Naive thymus-derived CD4-positive, alpha-beta T cell (primary cell): ENCODE measurements at regions of chrX and their contacts with region 1.

Region 1: DNA sequence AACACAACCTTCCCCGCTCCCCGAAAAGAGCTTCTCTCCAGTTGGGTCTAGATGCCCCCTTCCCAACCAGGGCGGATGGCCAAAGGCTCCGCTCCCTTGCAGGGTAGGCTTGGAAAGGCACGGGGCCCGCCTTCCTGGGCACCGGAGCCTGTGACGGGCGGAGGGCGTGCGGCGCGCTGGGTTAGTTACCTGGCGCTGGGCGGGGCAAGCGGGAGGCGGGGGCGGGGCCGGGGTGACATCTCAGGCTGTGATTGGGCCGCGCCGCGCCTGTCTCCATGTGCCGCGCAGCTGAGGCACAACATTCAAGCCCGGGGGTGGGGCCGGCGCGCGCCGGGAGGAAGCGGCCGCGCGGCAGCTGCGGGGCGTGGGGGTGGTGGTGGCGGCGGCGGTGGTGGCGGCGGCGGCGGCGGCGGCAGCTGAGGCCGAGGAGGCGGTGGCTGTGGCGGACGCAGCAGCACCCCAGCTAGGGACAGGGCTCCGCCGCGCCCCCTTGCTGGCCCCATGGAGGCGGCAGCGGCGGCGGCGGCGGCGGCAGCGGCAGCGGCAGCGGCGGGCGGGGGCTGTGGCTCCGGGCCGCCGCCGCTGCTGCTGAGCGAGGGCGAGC is at the start of gene REPS2:
- DNase-seq: peak; percentile 51 to 82 (median 70)
- ATAC-seq: peak; percentile 98
- H3K4me3 ChIP-seq: peak within 1 kb of the TSS; percentile 39
- H3K4me3 Mint-ChIP-seq: peak within 1 kb of the TSS; percentile 77 to 88 (median 84)
- H3K27ac ChIP-seq: peak within 1 kb of the TSS; percentile 7
- H3K27ac Mint-ChIP-seq: peak within 1 kb of the TSS in 7 of 9 donors; percentile 51 to 86 (median 73)
- H3K4me1 ChIP-seq: no peaks in the 10 kb centered on the region
- H3K4me1 Mint-ChIP-seq: peaks cover 0 to 4% (median 0%) of the 10 kb centered on the region in 7 donors
- H3K27me3 ChIP-seq: no peaks in the 10 kb centered on the region
- H3K27me3 Mint-ChIP-seq: peaks cover 3 to 25% (median 6%) of the 10 kb centered on the region in 5 donors
- total RNA-seq, gene REPS2: 1.1 to 6.2 (median 1.9) TPM in 4 of 5 experiments, not detected in the other

Region 2: GRCh38 chrX:16619024-16619423 is 327.4 kb before region 1 on chrX:
- CTCF ChIA-PET with region 1: no interaction called
- POLR2A ChIA-PET with region 1: no interaction called
- intact Hi-C with region 1: no loop called
- DNase-seq: no peak
- ATAC-seq: no peak
- H3K4me3 ChIP-seq: no peak overlapping the region
- H3K4me3 Mint-ChIP-seq: no peak overlapping the region
- H3K27ac ChIP-seq: no peak overlapping the region
- H3K27ac Mint-ChIP-seq: no peak overlapping the region
- H3K4me1 ChIP-seq: no peaks in the 10 kb centered on the region
- H3K4me1 Mint-ChIP-seq: peaks cover 0 to 5% (median 3%) of the 10 kb centered on the region in 7 donors
- H3K27me3 ChIP-seq: no peaks in the 10 kb centered on the region
- H3K27me3 Mint-ChIP-seq: no peaks in the 10 kb centered on the region

Region 3: DNA sequence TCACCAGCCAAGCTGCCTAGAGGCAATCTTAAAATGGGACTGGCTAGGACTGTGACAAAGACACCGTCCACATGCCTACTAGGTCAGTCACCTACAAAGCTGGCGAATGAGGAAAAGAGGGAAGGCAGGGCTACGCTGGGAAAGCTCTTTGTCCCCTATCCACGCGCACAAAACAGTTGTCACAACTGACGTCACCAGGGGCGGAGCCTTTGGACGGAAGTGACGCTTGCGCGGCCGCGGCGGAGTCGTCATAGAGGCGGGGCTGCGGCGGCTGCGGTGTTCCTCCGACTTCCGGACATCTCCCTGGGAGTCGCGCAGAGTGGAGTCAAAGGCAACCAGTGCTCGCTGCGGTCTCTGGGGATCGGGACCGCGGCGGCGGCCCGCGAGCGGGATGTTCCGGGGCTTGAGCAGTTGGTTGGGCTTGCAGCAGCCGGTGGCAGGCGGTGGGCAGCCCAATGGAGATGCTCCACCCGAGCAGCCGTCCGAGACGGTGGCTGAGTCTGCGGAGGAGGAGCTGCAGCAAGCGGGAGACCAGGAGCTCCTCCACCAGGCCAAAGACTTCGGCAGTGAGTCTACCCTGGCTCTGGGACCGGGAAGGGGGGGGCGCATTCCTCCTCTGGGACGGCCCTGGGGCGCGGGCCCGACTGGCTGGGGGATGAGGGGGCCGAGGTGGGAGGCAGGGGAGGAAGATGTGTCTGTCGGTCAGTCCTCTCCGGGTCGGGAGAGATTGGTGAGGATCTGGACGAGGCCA is 227.0 kb before region 1 on chrX and contains the start of gene SYAP1:
- CTCF ChIA-PET with region 1: no interaction called
- POLR2A ChIA-PET with region 1: no interaction called
- intact Hi-C with region 1: loop called in 1 of 2 experiments (anchors 2 kb)
- DNase-seq: peak; percentile 85 to 100 (median 96)
- ATAC-seq: peak; percentile 96
- H3K4me3 ChIP-seq: peak within 1 kb of the TSS; percentile 95
- H3K4me3 Mint-ChIP-seq: peak within 1 kb of the TSS; percentile 88 to 98 (median 94)
- H3K27ac ChIP-seq: peak within 1 kb of the TSS; percentile 99
- H3K27ac Mint-ChIP-seq: peak within 1 kb of the TSS; percentile 92 to 100 (median 99)
- H3K4me1 ChIP-seq: peaks cover 0 to 10% of the 10 kb centered on the region in 2 donors
- H3K4me1 Mint-ChIP-seq: peaks cover 2 to 63% (median 39%) of the 10 kb centered on the region in 7 donors
- H3K27me3 ChIP-seq: no peaks in the 10 kb centered on the region
- H3K27me3 Mint-ChIP-seq: no peaks in the 10 kb centered on the region
- total RNA-seq, gene SYAP1: 15.4 to 36.9 (median 15.6) TPM

Region 4: DNA sequence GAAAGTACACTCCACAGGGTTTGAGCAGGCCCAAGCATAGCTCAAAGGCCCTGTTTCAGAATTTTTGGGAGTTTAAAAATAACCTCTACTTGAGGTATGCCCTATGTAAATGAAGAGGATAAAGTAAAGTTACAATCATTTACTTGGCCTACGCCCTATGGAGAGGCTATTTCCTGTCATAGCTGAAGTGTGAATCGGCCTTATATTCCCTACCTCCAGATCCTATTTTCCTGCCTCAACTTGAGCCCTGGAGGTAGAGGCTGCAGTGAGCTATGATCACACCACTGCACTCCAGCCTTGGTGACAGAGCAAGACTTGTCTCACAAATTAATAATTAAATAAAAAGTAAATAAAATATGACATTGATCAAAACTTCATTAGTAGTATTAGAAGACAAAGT is 171.7 kb before region 1 on chrX:
- CTCF ChIA-PET with region 1: no interaction called
- POLR2A ChIA-PET with region 1: no interaction called
- intact Hi-C with region 1: no loop called
- DNase-seq: no peak
- ATAC-seq: no peak
- H3K4me3 ChIP-seq: no peak overlapping the region
- H3K4me3 Mint-ChIP-seq: no peak overlapping the region
- H3K27ac ChIP-seq: no peak overlapping the region
- H3K27ac Mint-ChIP-seq: no peak overlapping the region
- H3K4me1 ChIP-seq: no peaks in the 10 kb centered on the region
- H3K4me1 Mint-ChIP-seq: no peaks in the 10 kb centered on the region
- H3K27me3 ChIP-seq: no peaks in the 10 kb centered on the region
- H3K27me3 Mint-ChIP-seq: no peaks in the 10 kb centered on the region

Region 5: DNA sequence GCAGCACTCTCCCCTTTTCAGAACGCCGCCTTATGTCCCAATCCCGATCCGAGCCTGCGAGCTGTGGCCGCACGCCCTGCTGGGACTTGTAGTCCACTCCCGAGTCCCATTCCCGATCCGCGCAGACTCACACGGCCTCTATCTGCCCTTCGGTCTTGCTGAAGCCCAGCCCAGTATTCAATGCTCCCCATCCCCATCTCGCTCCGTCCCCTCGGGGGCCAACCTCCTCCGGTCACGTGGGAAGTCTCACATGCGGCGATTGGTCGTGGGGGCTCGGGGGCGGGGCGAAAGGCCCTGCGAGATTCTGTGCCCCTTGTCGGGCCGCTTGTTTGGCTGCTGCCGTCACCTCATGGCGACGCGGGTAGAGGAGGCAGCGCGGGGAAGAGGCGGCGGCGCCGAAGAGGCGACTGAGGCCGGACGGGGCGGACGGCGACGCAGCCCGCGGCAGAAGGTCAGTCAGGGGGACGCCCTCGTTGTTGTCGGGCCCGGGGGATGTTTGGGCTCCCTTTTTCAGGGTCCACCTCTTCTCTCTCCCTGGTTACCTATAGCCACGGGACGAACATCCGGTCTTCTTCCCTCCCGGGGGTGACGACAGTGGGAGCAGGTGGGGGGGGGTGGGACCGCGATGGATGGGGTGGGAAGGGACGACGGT is 160.2 kb before region 1 on chrX and contains the start of gene TXLNG:
- CTCF ChIA-PET with region 1: no interaction called
- POLR2A ChIA-PET with region 1: no interaction called
- intact Hi-C with region 1: loop called in 1 of 2 experiments (anchors 1 kb)
- DNase-seq: peak; percentile 81 to 98 (median 97)
- ATAC-seq: peak; percentile 97
- H3K4me3 ChIP-seq: peak within 1 kb of the TSS; percentile 94
- H3K4me3 Mint-ChIP-seq: peak within 1 kb of the TSS; percentile 95 to 99 (median 97)
- H3K27ac ChIP-seq: peak within 1 kb of the TSS; percentile 88
- H3K27ac Mint-ChIP-seq: peak within 1 kb of the TSS; percentile 78 to 94 (median 90)
- H3K4me1 ChIP-seq: peaks cover 0 to 3% of the 10 kb centered on the region in 2 donors
- H3K4me1 Mint-ChIP-seq: peaks cover 4 to 42% (median 12%) of the 10 kb centered on the region in 7 donors
- H3K27me3 ChIP-seq: no peaks in the 10 kb centered on the region
- H3K27me3 Mint-ChIP-seq: no peaks in the 10 kb centered on the region
- total RNA-seq, gene TXLNG: 11.9 to 23.1 (median 17.3) TPM

Region 6: DNA sequence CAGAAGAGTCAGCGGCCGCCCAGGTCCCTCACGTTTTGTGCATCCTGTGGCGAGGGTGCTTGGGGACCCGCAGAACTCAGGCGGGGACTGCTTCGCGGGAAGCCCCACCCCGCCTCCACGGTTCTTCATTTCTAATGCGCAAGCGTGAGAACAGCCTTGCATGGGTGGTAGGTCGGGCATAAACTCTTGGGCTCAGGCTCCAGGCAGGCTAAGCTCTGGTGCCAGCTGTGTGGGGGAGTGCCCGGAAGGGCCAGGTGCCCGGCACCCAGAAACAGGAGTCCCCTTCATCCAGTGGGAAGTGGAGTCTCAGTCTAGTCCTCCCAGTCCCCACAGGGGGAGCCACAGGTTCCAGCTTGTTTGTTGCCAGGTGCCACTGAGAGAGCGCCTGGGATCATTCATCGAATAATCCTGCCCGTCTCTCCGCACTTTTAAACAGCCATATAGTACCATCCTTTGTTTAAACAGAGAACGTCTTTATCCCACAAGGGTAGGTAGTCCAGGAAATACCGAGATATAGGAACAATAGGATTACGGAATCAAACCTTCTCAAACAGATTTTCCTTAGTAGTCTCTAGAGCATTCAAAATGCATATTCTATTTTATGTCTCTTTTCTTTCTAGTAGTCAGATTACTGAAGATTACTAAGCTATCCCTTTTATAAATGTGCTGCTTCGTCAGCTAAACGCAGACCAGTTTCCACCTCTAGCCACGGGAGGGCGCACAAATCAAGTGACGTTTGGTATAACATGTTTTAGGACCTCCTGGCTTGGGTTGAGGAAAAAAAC is 63.6 kb before region 1 on chrX:
- CTCF ChIA-PET with region 1: no interaction called
- POLR2A ChIA-PET with region 1: no interaction called
- intact Hi-C with region 1: loop called (anchors 2 kb)
- DNase-seq: peak; percentile 32 to 64 (median 57)
- ATAC-seq: peak; percentile 86
- H3K4me3 ChIP-seq: peak overlapping the region; percentile 74
- H3K4me3 Mint-ChIP-seq: peak overlapping the region; percentile 73 to 82 (median 78)
- H3K27ac ChIP-seq: peak overlapping the region; percentile 60
- H3K27ac Mint-ChIP-seq: peak overlapping the region in 7 of 9 donors; percentile 31 to 88 (median 67)
- H3K4me1 ChIP-seq: no peaks in the 10 kb centered on the region
- H3K4me1 Mint-ChIP-seq: peaks cover 0 to 10% (median 4%) of the 10 kb centered on the region in 7 donors
- H3K27me3 ChIP-seq: no peaks in the 10 kb centered on the region
- H3K27me3 Mint-ChIP-seq: peaks cover 0 to 12% (median 0%) of the 10 kb centered on the region in 5 donors

Region 7: GRCh38 chrX:16892504-16893362 is 53.7 kb before region 1 on chrX:
- CTCF ChIA-PET with region 1: no interaction called
- POLR2A ChIA-PET with region 1: no interaction called
- intact Hi-C with region 1: loop called in 1 of 2 experiments (anchors 2 kb)
- DNase-seq: peak in 8 of 9 donors; percentile 39 to 66 (median 57)
- ATAC-seq: peak; percentile 80
- H3K4me3 ChIP-seq: no peak overlapping the region
- H3K4me3 Mint-ChIP-seq: no peak overlapping the region
- H3K27ac ChIP-seq: no peak overlapping the region
- H3K27ac Mint-ChIP-seq: no peak overlapping the region
- H3K4me1 ChIP-seq: peaks cover 4 to 8% of the 10 kb centered on the region in 2 donors
- H3K4me1 Mint-ChIP-seq: peaks cover 5 to 19% (median 15%) of the 10 kb centered on the region in 7 donors
- H3K27me3 ChIP-seq: no peaks in the 10 kb centered on the region
- H3K27me3 Mint-ChIP-seq: peaks cover 0 to 18% (median 0%) of the 10 kb centered on the region in 5 donors

Region 8: DNA sequence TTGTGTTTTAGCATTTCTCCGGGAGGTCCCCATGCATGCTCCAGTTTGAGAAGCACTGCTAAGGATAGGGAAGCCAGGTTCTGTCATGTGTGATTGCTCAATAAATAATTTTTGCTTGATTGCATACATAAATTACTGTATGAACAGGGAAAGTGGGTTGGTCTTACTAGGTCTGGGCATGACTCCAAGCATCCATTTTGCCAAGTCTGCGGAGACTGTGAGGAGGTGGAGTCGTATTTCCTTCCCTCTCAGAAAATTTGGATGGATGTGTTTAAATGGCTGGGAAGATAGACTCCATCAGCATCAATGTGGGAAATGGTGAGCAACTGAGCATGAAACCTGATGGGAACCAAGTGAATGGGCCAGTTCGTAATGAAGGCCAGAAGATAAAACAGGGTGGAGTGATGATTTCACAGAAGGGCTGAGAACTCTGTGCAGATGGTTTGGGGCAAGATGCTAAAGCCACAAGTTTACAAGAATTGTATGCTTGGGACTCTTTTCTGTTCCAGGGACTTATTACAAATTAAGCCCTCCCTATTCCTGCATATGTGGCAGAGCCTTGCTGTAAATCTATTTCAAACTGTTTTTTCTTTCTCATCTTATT is 512.6 kb after region 1 on chrX:
- CTCF ChIA-PET with region 1: no interaction called
- POLR2A ChIA-PET with region 1: no interaction called
- intact Hi-C with region 1: no loop called
- DNase-seq: no peak
- ATAC-seq: no peak
- H3K4me3 ChIP-seq: no peak overlapping the region
- H3K4me3 Mint-ChIP-seq: no peak overlapping the region
- H3K27ac ChIP-seq: no peak overlapping the region
- H3K27ac Mint-ChIP-seq: no peak overlapping the region
- H3K4me1 ChIP-seq: no peaks in the 10 kb centered on the region
- H3K4me1 Mint-ChIP-seq: no peaks in the 10 kb centered on the region
- H3K27me3 ChIP-seq: no peaks in the 10 kb centered on the region
- H3K27me3 Mint-ChIP-seq: peaks cover 0 to 6% (median 0%) of the 10 kb centered on the region in 5 donors